Activated CD4-positive, alpha-beta T cell treated with anti-CD3 and anti-CD28 coated beads, Interleukin-2, amount 10 ng/mL, durations not matched to agents 24 days and 14 days (primary cell): ENCODE measurements at regions of chr1 and their contacts with region 1.

Region 1: DNA sequence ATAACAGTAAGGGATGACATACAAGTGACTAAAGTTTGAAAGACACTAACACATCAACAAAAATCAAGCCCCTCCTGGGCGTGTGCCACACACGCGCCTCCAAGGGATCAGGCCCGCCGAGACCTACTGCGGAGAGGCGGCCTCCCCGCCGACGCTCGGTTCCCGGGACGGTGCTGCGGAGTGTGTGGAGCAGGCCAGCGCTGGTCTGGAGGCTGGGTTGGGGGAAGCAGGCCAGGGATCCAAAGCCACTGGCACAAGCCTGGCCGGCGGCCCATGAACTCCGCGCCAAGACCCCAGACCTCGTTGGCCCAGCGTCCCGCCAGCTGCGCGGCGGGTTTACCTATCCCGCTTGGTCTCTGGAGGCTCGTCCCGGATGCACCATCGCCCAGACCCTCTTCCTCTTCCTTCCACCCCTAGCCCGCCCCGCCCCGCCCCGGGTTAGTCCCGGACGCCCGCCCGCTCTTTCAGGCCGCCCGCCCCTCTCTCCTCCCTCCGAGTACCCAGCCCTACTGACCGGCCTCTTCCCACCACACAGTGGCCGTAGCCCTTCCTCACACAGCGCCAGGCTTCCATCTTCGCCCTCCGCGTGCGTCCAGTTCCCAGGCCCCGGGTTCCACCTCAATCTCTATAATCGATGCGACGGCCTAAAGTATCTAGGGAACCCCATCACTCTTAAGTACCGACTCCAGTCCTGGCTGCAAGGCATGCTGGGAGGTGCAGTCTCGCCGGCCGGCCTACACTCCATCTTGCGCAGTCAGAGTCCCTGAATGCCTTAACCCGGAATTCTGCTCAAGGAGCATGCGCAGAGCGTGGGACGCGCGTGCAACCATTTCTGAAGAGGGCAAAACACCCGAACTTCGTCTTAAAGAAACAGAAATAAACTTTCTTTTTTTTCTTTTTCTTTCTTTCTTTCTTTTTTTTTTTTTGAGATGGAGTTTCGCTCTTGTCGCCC is at the start of gene ANGEL2:
- DNase-seq: peak; percentile 99
- H3K4me3 Mint-ChIP-seq: peak within 1 kb of the TSS; percentile 99
- H3K27ac Mint-ChIP-seq: peak within 1 kb of the TSS; percentile 100
- H3K4me1 Mint-ChIP-seq: peaks cover 26% of the 10 kb centered on the region
- H3K27me3 Mint-ChIP-seq: peaks cover 8% of the 10 kb centered on the region
- total RNA-seq, gene ANGEL2: 43.7 and 47.6 TPM in 2 replicates

Region 2: DNA sequence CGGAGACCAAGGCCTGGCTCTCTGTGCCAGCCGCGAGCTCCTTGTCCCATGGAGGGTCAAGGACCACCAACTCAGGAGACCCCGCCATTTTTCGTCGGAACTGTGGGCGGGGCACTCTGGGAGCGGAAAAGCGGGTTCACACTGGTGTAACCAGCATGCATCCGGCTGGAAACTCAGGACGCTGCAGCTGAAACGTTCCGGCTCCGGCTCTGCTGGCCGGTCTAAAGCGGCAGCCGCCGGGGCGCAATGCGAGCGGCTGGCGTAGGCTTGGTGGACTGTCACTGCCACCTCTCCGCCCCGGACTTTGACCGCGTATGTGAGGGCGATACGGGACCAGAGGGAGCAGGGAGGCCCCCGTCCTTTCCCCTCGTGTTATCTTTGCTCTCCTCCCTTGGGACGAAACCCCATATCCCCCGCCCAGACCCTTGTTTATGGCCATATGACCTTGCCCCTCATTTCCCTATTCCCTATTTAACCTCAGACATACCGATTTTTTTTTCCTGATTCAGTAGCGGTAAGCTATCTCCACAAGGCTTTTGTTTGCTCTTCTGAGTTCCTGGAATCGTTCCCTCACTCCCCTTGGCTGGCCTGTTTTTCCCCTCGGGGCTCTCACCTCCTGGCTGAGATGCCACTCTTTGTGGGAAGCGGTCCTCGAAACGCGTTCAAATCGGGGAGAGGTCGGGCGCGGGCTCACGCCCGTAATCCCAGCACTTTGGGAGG is 223.5 kb before region 1 on chr1 and contains the starts of genes NSL1 and TATDN3:
- intact Hi-C with region 1: loop called (anchors 1 kb)
- DNase-seq: peak; percentile 99
- H3K4me3 Mint-ChIP-seq: peak within 1 kb of the TSS; percentile 93
- H3K27ac Mint-ChIP-seq: peak within 1 kb of the TSS; percentile 96
- H3K4me1 Mint-ChIP-seq: peaks cover 26% of the 10 kb centered on the region
- H3K27me3 Mint-ChIP-seq: no peaks in the 10 kb centered on the region
- total RNA-seq, gene NSL1: 37.3 and 40.0 TPM in 2 replicates
- total RNA-seq, gene TATDN3: 15.1 and 16.2 TPM in 2 replicates

Region 3: GRCh38 chr1:213070406-213070805 is 55.0 kb after region 1 on chr1:
- intact Hi-C with region 1: loop called (anchors 1 kb)
- DNase-seq: peak; percentile 79
- H3K4me3 Mint-ChIP-seq: peak overlapping the region; percentile 41
- H3K27ac Mint-ChIP-seq: peak overlapping the region; percentile 34
- H3K4me1 Mint-ChIP-seq: peaks cover 28% of the 10 kb centered on the region
- H3K27me3 Mint-ChIP-seq: no peaks in the 10 kb centered on the region